Activated CD8-positive, alpha-beta T cell treated with anti-CD3 and anti-CD28 coated beads for 36 hours (primary cell): ENCODE measurements at regions of chr5 and their contacts with region 1.

Region 1: GRCh38 chr5:111278845-111279504 is 54.8 kb downstream of the CAMK4 start:
- DNase-seq: peak; percentile 95
- ATAC-seq: peak; percentile 98
- H3K4me3 Mint-ChIP-seq: no peak overlapping the region
- H3K27ac Mint-ChIP-seq: peak overlapping the region; percentile 83
- H3K4me1 Mint-ChIP-seq: peaks cover 71% of the 10 kb centered on the region
- H3K27me3 Mint-ChIP-seq: no peaks in the 10 kb centered on the region
- CTCF ChIP-seq: peak; percentile 87

Region 2: DNA sequence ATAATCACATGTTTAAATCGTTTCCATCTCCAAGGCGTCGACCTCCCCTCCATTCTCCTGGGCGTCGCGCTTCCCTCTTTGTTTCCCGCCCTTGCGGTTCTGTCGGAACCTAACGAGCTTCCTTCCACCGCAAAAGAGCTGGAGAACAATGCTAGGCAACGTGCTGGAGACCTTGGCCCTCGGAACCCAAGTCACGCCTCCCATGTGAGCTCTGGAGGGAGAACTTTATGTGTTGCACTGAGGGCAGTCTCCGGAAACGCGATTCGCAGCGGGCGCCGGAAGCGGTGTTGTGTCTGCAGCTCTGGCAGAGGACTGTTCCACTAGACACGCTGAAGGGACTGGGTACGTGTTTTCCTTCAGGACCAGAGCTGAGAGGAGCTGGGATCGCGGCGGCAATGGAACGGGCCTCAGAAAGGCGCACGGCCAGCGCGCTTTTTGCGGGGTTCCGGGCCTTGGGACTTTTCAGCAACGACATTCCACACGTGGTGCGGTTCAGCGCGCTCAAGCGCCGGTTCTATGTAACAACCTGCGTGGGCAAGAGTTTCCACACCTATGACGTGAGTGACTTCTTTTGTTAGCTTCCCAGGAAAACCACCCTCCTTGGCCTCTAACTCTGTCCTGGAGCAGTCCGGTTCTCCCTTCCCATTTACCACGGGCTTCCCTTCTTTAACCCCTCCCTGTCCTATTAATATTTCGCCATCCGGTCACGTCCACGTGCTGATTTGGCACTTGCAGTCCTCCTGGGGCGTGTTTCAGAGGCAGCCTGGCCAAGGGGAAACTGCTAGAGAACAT is 186.7 kb before region 1 on chr5 and contains the start of gene WDR36:
- CTCF ChIA-PET with region 1: no interaction called
- POLR2A ChIA-PET with region 1: no interaction called
- intact Hi-C with region 1: no loop called
- DNase-seq: peak; percentile 90
- ATAC-seq: peak; percentile 96
- H3K4me3 Mint-ChIP-seq: peak within 1 kb of the TSS; percentile 94
- H3K27ac Mint-ChIP-seq: peak within 1 kb of the TSS; percentile 96
- H3K4me1 Mint-ChIP-seq: peaks cover 37% of the 10 kb centered on the region
- H3K27me3 Mint-ChIP-seq: no peaks in the 10 kb centered on the region
- CTCF ChIP-seq: no peak
- total RNA-seq, gene WDR36: 65.1 to 65.6 TPM

Region 3: GRCh38 chr5:111158105-111158744 is 120.8 kb before region 1 on chr5:
- CTCF ChIA-PET with region 1: interaction called, 228 read pairs
- POLR2A ChIA-PET with region 1: no interaction called
- intact Hi-C with region 1: loop called (anchors 1 kb)
- DNase-seq: peak; percentile 90
- ATAC-seq: peak; percentile 84
- H3K4me3 Mint-ChIP-seq: no peak overlapping the region
- H3K27ac Mint-ChIP-seq: no peak overlapping the region
- H3K4me1 Mint-ChIP-seq: peaks cover 12% of the 10 kb centered on the region
- H3K27me3 Mint-ChIP-seq: peaks cover 2% of the 10 kb centered on the region
- CTCF ChIP-seq: peak; percentile 100

Region 4: GRCh38 chr5:111223889-111224563 is 54.9 kb before region 1 on chr5 and contains the start of gene CAMK4:
- CTCF ChIA-PET with region 1: interaction called, 70 read pairs
- POLR2A ChIA-PET with region 1: interaction called, 5 read pairs
- intact Hi-C with region 1: loop called (anchors 5 kb)
- DNase-seq: peak; percentile 74
- ATAC-seq: peak; percentile 65
- H3K4me3 Mint-ChIP-seq: peak within 1 kb of the TSS; percentile 96
- H3K27ac Mint-ChIP-seq: peak within 1 kb of the TSS; percentile 97
- H3K4me1 Mint-ChIP-seq: peaks cover 26% of the 10 kb centered on the region
- H3K27me3 Mint-ChIP-seq: no peaks in the 10 kb centered on the region
- CTCF ChIP-seq: peak; percentile 17
- total RNA-seq, gene CAMK4: 79.7 to 80.7 TPM

Region 5: DNA sequence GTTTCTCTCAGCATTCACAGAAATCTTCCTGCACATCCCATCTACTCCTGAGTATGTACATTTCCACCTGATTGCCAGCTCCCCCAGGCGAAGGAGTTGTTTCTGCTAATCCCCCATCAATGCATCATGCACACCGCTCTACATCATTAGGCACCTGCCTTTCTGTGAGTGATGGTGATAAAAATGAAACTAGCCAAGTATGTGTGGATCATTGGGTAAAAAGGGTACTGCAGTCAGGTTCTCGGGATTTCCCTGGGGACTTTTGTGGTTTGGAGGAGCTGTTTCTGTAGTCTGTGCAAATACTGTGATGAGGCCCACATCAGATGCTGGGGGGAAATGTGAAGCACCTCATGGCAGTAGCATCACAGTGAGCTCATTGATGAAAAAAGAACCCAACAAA is 24.4 kb before region 1 on chr5:
- CTCF ChIA-PET with region 1: interaction called, 41 read pairs
- POLR2A ChIA-PET with region 1: interaction called, 7 read pairs
- intact Hi-C with region 1: loop called (anchors 2 kb)
- DNase-seq: peak; percentile 95
- ATAC-seq: peak; percentile 85
- H3K4me3 Mint-ChIP-seq: peak overlapping the region; percentile 68
- H3K27ac Mint-ChIP-seq: peak overlapping the region; percentile 99
- H3K4me1 Mint-ChIP-seq: peaks cover 77% of the 10 kb centered on the region
- H3K27me3 Mint-ChIP-seq: no peaks in the 10 kb centered on the region
- CTCF ChIP-seq: no peak

Region 6: GRCh38 chr5:111364992-111365391 is 86.0 kb after region 1 on chr5:
- CTCF ChIA-PET with region 1: no interaction called
- POLR2A ChIA-PET with region 1: no interaction called
- intact Hi-C with region 1: no loop called
- DNase-seq: no peak
- ATAC-seq: no peak
- H3K4me3 Mint-ChIP-seq: no peak overlapping the region
- H3K27ac Mint-ChIP-seq: no peak overlapping the region
- H3K4me1 Mint-ChIP-seq: peaks cover 46% of the 10 kb centered on the region
- H3K27me3 Mint-ChIP-seq: no peaks in the 10 kb centered on the region
- CTCF ChIP-seq: no peak

Region 7: DNA sequence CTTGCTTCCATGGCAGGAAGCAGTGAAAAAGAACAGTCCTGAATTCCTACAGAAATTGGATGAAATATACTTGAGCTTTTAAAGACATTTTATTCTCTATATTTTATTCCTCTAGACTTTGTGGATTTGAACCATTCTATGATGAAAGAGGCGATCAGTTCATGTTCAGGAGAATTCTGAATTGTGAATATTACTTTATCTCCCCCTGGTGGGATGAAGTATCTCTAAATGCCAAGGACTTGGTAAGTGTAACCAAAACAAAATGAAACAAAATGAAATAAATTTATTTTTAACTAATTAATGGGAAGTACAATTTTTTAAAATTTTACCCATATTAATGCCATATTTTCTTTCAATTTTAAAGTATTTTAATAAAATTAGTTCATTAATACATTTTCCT is 199.3 kb after region 1 on chr5:
- CTCF ChIA-PET with region 1: interaction called, 14 read pairs
- POLR2A ChIA-PET with region 1: no interaction called
- intact Hi-C with region 1: no loop called
- DNase-seq: no peak
- ATAC-seq: no peak
- H3K4me3 Mint-ChIP-seq: no peak overlapping the region
- H3K27ac Mint-ChIP-seq: no peak overlapping the region
- H3K4me1 Mint-ChIP-seq: no peaks in the 10 kb centered on the region
- H3K27me3 Mint-ChIP-seq: no peaks in the 10 kb centered on the region
- CTCF ChIP-seq: no peak

Region 8: DNA sequence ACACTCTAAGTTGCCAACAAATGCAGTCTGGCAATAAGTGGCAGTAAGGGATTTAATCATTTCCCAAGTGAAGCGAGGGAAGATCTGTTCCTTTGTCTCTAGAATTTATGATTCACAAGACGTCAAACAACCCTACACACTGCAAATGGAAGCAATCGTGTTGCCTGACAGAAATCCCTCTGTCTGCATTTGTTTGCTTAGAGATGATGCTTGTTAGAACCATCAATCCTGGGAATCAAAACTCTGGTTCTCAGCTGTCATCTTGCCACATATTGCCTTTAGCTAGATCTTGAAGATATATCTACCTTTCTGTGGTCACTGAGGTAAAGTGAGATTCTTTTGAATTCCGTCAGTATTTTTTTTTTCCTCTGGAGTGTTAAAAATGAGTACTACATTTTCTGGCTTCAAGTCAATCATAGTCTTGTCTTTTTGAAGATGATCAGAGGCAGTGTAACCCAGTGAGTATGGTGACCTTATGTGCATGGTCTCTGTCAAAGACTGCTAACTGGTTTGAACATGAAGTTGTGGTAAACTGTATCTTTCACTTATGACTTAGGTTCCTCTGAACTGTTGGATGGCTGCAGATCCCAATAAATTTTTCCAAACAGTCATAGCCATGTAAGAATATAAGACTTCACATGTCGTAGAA is 339.8 kb after region 1 on chr5:
- CTCF ChIA-PET with region 1: no interaction called
- POLR2A ChIA-PET with region 1: no interaction called
- intact Hi-C with region 1: no loop called
- DNase-seq: no peak
- ATAC-seq: no peak
- H3K4me3 Mint-ChIP-seq: no peak overlapping the region
- H3K27ac Mint-ChIP-seq: no peak overlapping the region
- H3K4me1 Mint-ChIP-seq: no peaks in the 10 kb centered on the region
- H3K27me3 Mint-ChIP-seq: peaks cover 9% of the 10 kb centered on the region
- CTCF ChIP-seq: no peak